Common myeloid progenitor, CD34-positive (primary cell): ENCODE measurements at regions of chr10 and their contacts with region 1.

Region 1: GRCh38 chr10:84537447-84537931 is 209.1 kb downstream of the CCSER2 start:
- DNase-seq: peak; percentile 67 to 85 (median 79)
- H3K4me3 ChIP-seq: no peak overlapping the region
- H3K27ac ChIP-seq: no peak overlapping the region
- H3K4me1 ChIP-seq: peaks cover 0 to 9% (median 6%) of the 10 kb centered on the region in 4 experiments
- H3K27me3 ChIP-seq: peaks cover 0 to 42% (median 12%) of the 10 kb centered on the region in 5 experiments

Region 2: GRCh38 chr10:84256510-84257342 is 280.8 kb before region 1 on chr10:
- CTCF ChIA-PET with region 1: interaction called, 139 read pairs
- POLR2A ChIA-PET with region 1: no interaction called
- DNase-seq: peak; percentile 52 to 69 (median 64)
- H3K4me3 ChIP-seq: no peak overlapping the region
- H3K27ac ChIP-seq: no peak overlapping the region
- H3K4me1 ChIP-seq: no peaks in the 10 kb centered on the region
- H3K27me3 ChIP-seq: peaks cover 0 to 4% (median 0%) of the 10 kb centered on the region in 5 experiments

Region 3: DNA sequence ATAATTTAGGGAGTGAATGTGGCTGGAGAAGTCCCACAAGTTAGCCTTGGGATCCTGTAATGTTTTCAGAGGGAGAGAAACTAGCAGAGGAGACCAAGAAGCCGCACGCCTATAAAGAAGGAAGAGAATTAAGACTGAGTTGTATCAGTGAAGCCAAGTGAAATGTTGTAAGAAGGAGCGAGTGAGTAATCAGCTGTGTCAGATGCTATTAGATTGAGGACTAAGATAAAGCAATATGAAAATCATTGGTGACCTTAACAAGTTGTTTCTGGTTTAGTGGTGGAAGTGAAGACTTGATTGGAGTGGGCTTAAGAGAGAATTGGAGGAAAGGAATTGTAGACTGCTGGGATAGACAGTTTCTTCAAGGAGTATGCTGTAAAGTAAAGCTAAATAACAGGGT is 200.3 kb before region 1 on chr10:
- CTCF ChIA-PET with region 1: interaction called, 12 read pairs
- POLR2A ChIA-PET with region 1: no interaction called
- DNase-seq: no peak
- H3K4me3 ChIP-seq: no peak overlapping the region
- H3K27ac ChIP-seq: no peak overlapping the region
- H3K4me1 ChIP-seq: peaks cover 0 to 20% (median 3%) of the 10 kb centered on the region in 4 experiments
- H3K27me3 ChIP-seq: no peaks in the 10 kb centered on the region

Region 4: GRCh38 chr10:84360637-84361365 is 176.7 kb before region 1 on chr10:
- CTCF ChIA-PET with region 1: interaction called, 35 read pairs
- POLR2A ChIA-PET with region 1: no interaction called
- DNase-seq: peak in 2 of 3 donors; percentile 6 to 7
- H3K4me3 ChIP-seq: peak overlapping the region in 1 of 7 experiments; percentile 29
- H3K27ac ChIP-seq: no peak overlapping the region
- H3K4me1 ChIP-seq: peaks cover 0 to 11% (median 6%) of the 10 kb centered on the region in 4 experiments
- H3K27me3 ChIP-seq: no peaks in the 10 kb centered on the region

Region 5: GRCh38 chr10:84429926-84430520 is 107.5 kb before region 1 on chr10:
- CTCF ChIA-PET with region 1: interaction called, 17 read pairs
- POLR2A ChIA-PET with region 1: no interaction called
- DNase-seq: peak; percentile 48 to 65 (median 61)
- H3K4me3 ChIP-seq: no peak overlapping the region
- H3K27ac ChIP-seq: no peak overlapping the region
- H3K4me1 ChIP-seq: peaks cover under 1 to 8% (median 5%) of the 10 kb centered on the region in 4 experiments
- H3K27me3 ChIP-seq: no peaks in the 10 kb centered on the region

Region 6: GRCh38 chr10:84548869-84549268 is 11.4 kb after region 1 on chr10:
- CTCF ChIA-PET with region 1: interaction called, 11 read pairs
- POLR2A ChIA-PET with region 1: no interaction called
- DNase-seq: peak in 2 of 3 donors; percentile 9 to 18
- H3K4me3 ChIP-seq: no peak overlapping the region
- H3K27ac ChIP-seq: no peak overlapping the region
- H3K4me1 ChIP-seq: no peaks in the 10 kb centered on the region
- H3K27me3 ChIP-seq: peaks cover 0 to 56% (median 18%) of the 10 kb centered on the region in 5 experiments